Activated CD4-positive, alpha-beta memory T cell treated with anti-CD3 and anti-CD28 coated beads for 36 hours (primary cell): ENCODE measurements at regions of chr10 and their contacts with region 1.

Region 1: DNA sequence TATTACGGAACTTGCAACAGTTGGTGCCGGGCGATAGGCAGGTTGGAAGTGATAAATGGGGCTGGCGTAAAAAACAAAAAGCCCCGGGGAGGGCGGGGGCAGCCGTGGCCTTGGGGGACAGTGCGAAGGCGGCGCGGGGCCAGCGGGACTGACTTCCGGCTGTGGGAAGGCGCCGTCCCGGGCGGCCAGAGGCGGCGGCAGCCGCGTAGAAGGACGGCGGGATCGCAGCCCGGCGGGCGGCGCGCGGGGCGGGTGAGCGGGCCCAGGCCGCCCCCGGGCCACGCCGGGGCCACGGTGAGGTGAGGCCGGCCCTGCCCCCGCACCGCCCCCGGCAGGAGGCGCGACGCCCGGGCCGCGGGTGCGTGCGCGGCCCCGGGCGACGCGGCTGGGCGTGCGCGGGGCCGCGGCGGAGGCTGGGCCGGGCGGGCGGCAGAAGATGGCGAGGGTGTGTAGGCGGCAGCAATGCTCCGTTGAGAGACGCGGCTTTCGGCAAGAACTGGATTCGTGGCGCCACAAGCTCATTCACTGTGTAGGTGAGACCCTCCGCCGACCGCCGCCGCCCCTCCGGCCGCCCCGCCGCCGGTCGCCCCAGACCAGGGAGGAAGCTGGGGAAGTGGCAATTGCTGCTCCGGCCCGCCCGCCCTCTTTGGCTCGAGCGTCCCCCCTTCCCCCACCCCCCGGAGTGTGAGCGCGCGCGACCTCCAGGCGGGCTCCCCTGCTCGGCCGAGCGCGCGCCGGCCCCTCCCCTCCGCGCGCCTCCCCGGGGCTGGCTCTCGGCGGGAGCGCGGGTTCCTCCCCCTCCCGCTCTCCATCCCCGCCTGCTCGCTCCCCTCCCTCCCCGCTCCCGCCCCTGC is at the start of gene LCOR:
- DNase-seq: peak; percentile 87
- H3K4me3 Mint-ChIP-seq: peak within 1 kb of the TSS; percentile 88
- H3K27ac Mint-ChIP-seq: peak within 1 kb of the TSS; percentile 97
- H3K4me1 Mint-ChIP-seq: peaks cover 48% of the 10 kb centered on the region
- H3K27me3 Mint-ChIP-seq: no peaks in the 10 kb centered on the region
- total RNA-seq, gene LCOR: 15.0 to 18.2 TPM

Region 2: DNA sequence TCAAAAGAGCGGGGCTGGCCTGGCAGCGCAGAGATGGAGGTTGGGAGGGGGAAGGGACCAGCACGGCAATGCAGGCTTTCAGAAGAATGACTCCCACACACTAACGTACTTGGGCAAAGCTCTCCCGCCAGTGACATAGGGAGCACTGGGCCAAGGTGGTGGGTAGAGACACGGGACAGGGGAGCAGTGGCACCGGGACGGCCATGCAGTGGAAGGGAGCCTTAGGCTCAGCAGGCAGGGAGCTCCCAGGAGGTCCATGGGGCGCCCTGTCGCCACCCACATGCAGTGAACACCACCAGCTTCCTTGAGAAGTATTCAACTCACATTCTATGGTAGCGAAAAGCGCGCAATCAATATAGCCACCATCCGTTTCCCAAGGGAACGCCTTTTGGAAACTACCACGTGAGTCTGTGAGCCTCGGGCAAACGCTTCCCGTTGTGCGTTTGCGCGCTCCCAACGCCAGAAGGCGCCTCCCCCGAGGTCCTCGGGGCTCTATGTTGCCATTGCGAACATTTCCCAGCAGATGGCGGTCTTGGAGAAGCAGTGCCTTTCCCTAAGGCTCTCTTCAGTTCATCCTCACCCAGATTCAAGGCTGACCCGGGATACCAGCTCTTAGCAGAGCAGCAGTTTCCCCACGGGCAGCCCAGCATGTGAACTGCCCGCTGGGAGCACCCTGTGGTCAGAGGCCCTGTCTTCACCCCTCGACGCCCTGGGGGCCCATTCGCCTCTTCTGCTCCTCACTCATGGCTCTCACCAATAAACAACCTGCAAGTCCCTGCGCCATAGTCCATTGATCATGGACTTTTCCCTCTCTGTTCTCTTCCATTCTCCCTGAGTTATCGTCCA is 456.9 kb before region 1 on chr10:
- CTCF ChIA-PET with region 1: interaction called, 4 read pairs
- POLR2A ChIA-PET with region 1: no interaction called
- intact Hi-C with region 1: loop called (anchors 1 kb)
- DNase-seq: peak; percentile 87
- H3K4me3 Mint-ChIP-seq: peak overlapping the region; percentile 69
- H3K27ac Mint-ChIP-seq: no peak overlapping the region
- H3K4me1 Mint-ChIP-seq: peaks cover 8% of the 10 kb centered on the region
- H3K27me3 Mint-ChIP-seq: peaks cover 11% of the 10 kb centered on the region

Region 3: DNA sequence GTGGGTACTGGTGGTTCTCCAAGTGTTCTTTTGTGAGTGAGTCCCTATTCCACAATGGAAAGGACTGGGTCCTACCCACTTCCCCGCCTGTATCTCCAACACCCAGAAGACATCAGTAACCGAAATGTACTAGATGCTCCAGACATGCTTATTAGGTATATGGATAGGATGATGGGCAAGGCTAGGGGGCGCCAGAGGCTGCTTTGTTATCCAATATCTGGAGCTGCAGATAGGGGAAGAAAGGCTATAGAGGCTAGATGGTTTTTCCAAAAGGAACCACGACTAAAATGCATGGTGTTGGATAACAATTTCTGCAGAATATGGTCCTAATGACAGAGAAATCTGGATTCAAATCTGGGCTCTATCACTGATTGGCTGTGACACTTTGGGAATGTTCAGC is 189.1 kb before region 1 on chr10:
- CTCF ChIA-PET with region 1: interaction called, 30 read pairs
- POLR2A ChIA-PET with region 1: no interaction called
- intact Hi-C with region 1: loop called (anchors 1 kb)
- DNase-seq: peak; percentile 86
- H3K4me3 Mint-ChIP-seq: no peak overlapping the region
- H3K27ac Mint-ChIP-seq: no peak overlapping the region
- H3K4me1 Mint-ChIP-seq: peaks cover 18% of the 10 kb centered on the region
- H3K27me3 Mint-ChIP-seq: no peaks in the 10 kb centered on the region

Region 4: GRCh38 chr10:96896884-96897589 is 64.9 kb after region 1 on chr10:
- CTCF ChIA-PET with region 1: no interaction called
- POLR2A ChIA-PET with region 1: no interaction called
- intact Hi-C with region 1: loop called (anchors 5 kb)
- DNase-seq: no peak
- H3K4me3 Mint-ChIP-seq: no peak overlapping the region
- H3K27ac Mint-ChIP-seq: peak overlapping the region; percentile 43
- H3K4me1 Mint-ChIP-seq: peaks cover 48% of the 10 kb centered on the region
- H3K27me3 Mint-ChIP-seq: no peaks in the 10 kb centered on the region

Region 5: GRCh38 chr10:97016728-97017473 is 184.8 kb after region 1 on chr10:
- CTCF ChIA-PET with region 1: no interaction called
- POLR2A ChIA-PET with region 1: no interaction called
- intact Hi-C with region 1: loop called (anchors 5 kb)
- DNase-seq: peak; percentile 53
- H3K4me3 Mint-ChIP-seq: no peak overlapping the region
- H3K27ac Mint-ChIP-seq: no peak overlapping the region
- H3K4me1 Mint-ChIP-seq: peaks cover 11% of the 10 kb centered on the region
- H3K27me3 Mint-ChIP-seq: no peaks in the 10 kb centered on the region